Common myeloid progenitor, CD34-positive (primary cell): ENCODE measurements at regions of chr19 and their contacts with region 1.

Region 1: DNA sequence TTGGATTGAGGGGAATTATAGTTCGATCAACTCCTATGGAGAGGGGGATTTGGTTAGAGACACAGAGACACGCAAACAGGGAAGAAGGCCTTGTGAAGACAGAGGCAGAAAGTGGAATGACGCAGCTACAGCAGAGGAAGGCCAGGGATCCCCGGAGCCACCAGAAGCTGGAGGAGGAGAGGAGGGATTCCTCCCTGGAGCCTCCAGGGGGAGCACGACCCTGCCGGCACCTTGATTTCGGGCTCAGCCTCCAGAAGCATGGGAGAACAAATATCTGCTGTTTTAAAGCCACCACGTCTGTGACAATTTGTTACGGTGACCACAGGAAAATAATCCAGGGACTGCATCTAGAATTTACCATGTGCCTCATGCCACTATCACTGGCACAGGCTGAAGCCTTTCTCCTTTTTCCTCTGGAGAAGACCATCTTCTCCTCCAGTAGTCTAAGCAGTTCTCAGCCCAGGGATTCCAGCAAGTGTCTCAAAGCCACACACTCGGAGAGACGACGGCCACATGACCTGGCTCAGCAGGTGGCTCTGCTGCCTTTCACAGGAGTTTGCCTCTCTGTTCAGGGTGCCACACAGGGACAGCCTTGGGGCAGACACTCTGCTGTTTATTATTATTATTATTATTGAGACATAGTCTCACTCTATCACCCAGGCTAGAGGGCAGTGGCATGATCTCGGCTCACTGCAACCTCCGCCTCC is 39.9 kb upstream of the CCNE1 start:
- DNase-seq: peak; percentile 31 to 63 (median 50)
- H3K4me3 ChIP-seq: no peak overlapping the region
- H3K27ac ChIP-seq: no peak overlapping the region
- H3K4me1 ChIP-seq: peaks cover 0 to 18% (median 15%) of the 10 kb centered on the region in 4 experiments
- H3K27me3 ChIP-seq: no peaks in the 10 kb centered on the region

Region 2: DNA sequence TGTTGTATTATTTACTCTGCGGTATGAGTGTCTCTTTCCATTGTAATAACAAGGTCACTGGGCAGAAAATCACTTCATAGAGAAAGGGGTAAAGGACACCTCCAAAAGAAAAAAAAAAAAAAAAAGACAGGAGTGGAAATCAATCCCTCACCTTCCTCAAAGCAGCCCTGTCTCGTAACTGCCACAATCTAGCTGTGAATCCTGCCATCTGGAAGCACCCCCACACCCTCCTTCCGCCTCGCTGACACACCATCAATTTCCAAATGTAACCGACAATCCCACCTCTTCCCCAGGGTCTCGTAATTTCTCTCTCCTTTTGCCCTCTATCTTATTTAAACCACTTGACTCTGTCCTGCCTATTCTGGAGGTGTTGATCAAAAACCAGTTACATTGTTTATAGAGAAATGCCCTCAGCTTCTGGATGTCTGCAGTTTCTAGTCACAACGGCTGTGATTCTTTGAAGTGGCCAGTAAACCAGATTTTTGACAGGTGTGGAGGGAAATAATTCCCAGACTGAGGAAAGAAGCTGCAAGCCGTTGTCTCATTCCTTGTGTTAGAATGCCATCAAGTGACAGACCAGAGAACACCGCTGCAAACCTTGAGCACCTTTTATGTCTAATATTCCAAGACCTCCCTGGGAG is 174.9 kb before region 1 on chr19:
- CTCF ChIA-PET with region 1: no interaction called
- POLR2A ChIA-PET with region 1: no interaction called
- DNase-seq: peak in 1 of 3 donors; percentile 21
- H3K4me3 ChIP-seq: no peak overlapping the region
- H3K27ac ChIP-seq: no peak overlapping the region
- H3K4me1 ChIP-seq: no peaks in the 10 kb centered on the region
- H3K27me3 ChIP-seq: peaks cover 5 to 55% (median 15%) of the 10 kb centered on the region in 5 experiments

Region 3: GRCh38 chr19:29761575-29762232 is 10.2 kb before region 1 on chr19:
- CTCF ChIA-PET with region 1: interaction called, 37 read pairs
- POLR2A ChIA-PET with region 1: no interaction called
- DNase-seq: no peak
- H3K4me3 ChIP-seq: no peak overlapping the region
- H3K27ac ChIP-seq: no peak overlapping the region
- H3K4me1 ChIP-seq: peaks cover 0 to 3% (median 1%) of the 10 kb centered on the region in 4 experiments
- H3K27me3 ChIP-seq: no peaks in the 10 kb centered on the region

Region 4: GRCh38 chr19:29817311-29817710 is 45.5 kb after region 1 on chr19:
- CTCF ChIA-PET with region 1: interaction called, 10 read pairs
- POLR2A ChIA-PET with region 1: no interaction called
- DNase-seq: no peak
- H3K4me3 ChIP-seq: no peak overlapping the region
- H3K27ac ChIP-seq: no peak overlapping the region
- H3K4me1 ChIP-seq: peaks cover 0 to 19% (median 16%) of the 10 kb centered on the region in 4 experiments
- H3K27me3 ChIP-seq: no peaks in the 10 kb centered on the region